MCF 10A (cell line): ENCODE measurements at regions of chr1 and their contacts with region 1.

Region 1: GRCh38 chr1:208245185-208245705 is 1.1 kb upstream of the PLXNA2 start:
- DNase-seq: peak; percentile 98
- H3K4me3 Mint-ChIP-seq: peak overlapping the region; percentile 94
- H3K27ac Mint-ChIP-seq: no peak overlapping the region
- H3K4me1 Mint-ChIP-seq: peaks cover 26% of the 10 kb centered on the region
- H3K27me3 Mint-ChIP-seq: no peaks in the 10 kb centered on the region
- CTCF ChIP-seq: peak; percentile 94

Region 2: DNA sequence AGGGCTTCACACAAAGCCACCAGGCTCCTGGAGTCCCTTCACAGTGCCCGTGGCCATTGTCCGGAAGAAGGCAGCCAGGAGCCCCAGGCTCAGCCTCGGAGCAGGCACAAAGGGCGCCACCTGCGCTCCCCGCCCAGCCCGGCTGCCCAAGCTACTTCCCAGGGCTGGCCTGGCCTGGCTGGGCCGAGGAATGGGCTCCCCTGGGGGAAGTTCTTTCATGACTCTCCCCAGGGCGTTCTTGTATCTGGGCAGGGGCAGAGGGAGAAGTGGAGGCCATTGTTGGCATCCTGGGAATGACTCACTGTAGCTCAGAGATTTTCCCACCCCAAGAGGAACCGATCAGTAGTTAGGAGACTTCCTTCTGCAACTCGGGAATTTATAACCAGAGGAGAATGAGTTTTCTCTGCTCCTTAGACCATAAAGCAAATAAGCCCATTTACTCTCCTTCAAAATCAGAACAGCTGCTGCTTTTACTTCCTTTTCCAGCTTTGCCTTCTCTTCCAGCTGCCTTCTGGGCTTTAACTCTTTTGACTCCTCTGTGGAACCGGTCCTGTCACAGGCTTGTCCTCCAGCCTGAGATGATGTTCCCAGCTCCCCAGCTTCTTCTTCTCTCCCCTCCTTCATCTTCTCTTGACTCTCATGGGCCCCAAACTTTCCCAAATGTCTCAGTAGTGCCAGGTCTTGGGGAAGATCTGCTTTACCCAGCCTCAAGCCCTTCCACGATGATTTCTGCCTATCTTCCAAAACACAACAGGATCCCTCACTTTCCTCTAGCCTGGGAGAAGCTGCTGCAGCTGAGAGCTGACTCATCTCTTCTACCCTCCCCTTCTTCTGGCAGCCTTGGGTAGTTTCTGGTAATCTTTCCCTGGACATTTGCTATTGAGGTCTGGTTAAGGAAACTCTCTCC is 215.6 kb before region 1 on chr1:
- CTCF ChIA-PET with region 1: interaction called, 688 read pairs
- POLR2A ChIA-PET with region 1: interaction called, 21 read pairs
- intact Hi-C with region 1: no loop called
- DNase-seq: peak; percentile 26
- H3K4me3 Mint-ChIP-seq: no peak overlapping the region
- H3K27ac Mint-ChIP-seq: peak overlapping the region; percentile 21
- H3K4me1 Mint-ChIP-seq: no peaks in the 10 kb centered on the region
- H3K27me3 Mint-ChIP-seq: no peaks in the 10 kb centered on the region
- CTCF ChIP-seq: no peak

Region 3: DNA sequence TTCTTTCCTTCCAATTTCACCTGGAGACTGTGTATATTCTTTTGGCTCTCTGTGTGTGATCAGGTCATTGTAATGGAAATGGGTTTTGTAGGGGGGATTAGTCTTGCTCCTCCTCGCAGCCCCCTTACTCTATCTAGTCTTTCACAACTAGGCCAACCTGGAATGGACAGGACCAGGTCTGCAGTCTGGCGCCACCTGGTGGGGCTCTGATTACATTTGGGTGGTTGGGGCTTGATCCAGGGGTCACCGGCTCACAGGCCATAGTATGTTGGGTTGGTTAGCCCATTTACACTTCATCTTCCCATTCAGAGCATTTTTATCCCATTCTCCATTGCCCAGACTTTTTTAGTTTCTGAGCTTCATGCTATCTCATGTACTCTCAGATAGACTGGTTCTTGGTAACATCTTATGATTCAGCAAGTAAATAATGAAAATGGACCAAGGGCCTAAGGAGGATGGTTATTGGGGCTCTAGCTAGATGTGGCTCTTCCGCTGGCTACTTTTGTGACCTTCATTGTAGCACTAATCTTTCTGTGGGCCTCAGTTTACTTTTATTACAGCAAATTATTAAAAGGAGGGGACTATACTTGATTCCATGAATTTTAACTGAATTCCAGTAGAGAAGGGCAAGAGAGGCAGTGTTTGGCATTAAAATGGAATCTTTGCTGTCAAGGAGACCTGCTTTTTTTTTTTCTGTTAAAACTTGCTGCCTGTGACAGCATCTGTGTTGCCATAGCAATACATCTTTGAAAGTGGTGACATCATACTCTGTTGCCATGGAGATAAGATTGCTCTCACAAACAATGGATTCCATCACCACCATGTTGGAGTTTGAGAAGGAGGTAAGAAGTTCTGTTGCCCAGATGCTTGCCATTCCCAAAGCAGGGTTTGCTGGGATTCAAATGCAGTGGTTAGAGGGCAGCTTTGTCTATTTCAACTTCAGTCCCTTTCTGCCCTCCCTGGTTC is 151.2 kb before region 1 on chr1:
- CTCF ChIA-PET with region 1: interaction called, 49 read pairs
- POLR2A ChIA-PET with region 1: no interaction called
- intact Hi-C with region 1: no loop called
- DNase-seq: peak; percentile 83
- H3K4me3 Mint-ChIP-seq: no peak overlapping the region
- H3K27ac Mint-ChIP-seq: peak overlapping the region; percentile 31
- H3K4me1 Mint-ChIP-seq: peaks cover 2% of the 10 kb centered on the region
- H3K27me3 Mint-ChIP-seq: no peaks in the 10 kb centered on the region
- CTCF ChIP-seq: peak; percentile 96

Region 4: GRCh38 chr1:208149776-208150514 is 95.3 kb before region 1 on chr1:
- CTCF ChIA-PET with region 1: interaction called, 297 read pairs
- POLR2A ChIA-PET with region 1: interaction called, 8 read pairs
- intact Hi-C with region 1: no loop called
- DNase-seq: no peak
- H3K4me3 Mint-ChIP-seq: no peak overlapping the region
- H3K27ac Mint-ChIP-seq: no peak overlapping the region
- H3K4me1 Mint-ChIP-seq: peaks cover 10% of the 10 kb centered on the region
- H3K27me3 Mint-ChIP-seq: no peaks in the 10 kb centered on the region
- CTCF ChIP-seq: no peak

Region 5: DNA sequence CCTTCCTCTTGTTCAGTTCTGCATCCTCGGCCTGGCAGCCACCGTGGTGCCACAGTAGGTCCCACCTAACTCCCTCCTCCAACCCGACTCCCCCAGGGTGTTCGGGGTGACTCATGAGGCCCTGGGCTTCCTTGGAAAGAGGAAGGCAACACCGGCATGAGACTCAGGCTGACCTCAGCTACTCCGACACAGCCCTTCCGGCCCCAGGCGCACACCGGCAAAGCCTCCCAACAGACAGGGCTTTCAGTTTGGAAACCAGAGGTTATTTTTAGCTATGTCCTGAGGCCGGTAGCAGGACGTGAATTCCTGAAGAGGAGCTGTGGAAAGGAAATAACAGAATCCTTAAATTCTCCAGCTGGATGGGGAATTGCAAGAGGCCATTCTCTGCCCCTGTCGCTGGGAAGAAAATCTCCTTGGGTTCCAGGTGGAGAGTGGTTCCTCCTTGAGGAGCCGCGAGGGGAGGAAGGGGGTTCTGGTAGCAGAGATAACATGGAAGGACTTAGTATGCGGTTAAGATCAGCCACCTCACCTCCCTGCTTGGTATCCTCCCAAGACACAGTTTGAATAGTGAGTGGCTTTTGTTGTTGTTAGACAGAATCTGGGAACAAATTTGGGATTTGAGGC is 25.5 kb before region 1 on chr1:
- CTCF ChIA-PET with region 1: interaction called, 545 read pairs
- POLR2A ChIA-PET with region 1: interaction called, 186 read pairs
- intact Hi-C with region 1: no loop called
- DNase-seq: peak; percentile 98
- H3K4me3 Mint-ChIP-seq: peak overlapping the region; percentile 57
- H3K27ac Mint-ChIP-seq: peak overlapping the region; percentile 97
- H3K4me1 Mint-ChIP-seq: peaks cover 60% of the 10 kb centered on the region
- H3K27me3 Mint-ChIP-seq: no peaks in the 10 kb centered on the region
- CTCF ChIP-seq: no peak

Region 6: DNA sequence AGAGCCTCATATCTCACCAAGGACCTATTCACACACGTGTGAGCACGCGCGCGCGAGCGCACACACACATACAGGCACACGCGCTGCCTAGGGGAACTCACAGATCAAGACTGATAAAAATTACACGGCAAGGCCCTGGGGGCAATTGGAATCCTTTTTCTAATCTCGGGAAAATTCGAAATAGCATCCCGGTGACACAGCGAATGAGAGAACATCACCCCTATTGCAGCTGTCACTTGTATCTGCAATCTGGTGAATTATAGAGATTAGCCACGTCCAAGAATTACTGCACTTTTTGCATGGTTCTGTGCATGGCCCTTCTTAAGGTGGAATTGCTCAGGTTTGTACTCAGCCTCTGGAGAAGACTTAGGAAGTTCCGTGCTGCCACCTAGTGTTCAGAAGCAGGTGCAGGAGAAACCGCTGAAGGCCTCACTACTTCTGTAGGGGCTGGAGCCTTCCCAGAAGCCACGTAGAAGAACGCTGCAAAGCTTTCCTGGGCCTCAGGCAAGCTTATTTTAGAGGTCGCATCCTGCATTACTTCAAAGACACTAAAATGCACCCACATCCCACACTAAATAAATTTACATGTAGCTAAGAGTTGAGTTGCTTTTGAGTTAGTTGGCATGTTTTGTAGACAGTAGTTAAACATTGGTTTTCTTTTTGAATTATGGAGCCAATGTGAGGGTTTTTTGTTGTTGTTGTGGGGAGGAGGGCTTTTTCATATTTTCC is 1109.0 kb after region 1 on chr1:
- CTCF ChIA-PET with region 1: interaction called, 13 read pairs
- POLR2A ChIA-PET with region 1: interaction called, 17 read pairs
- intact Hi-C with region 1: loop called (anchors 1 kb)
- DNase-seq: peak; percentile 99
- H3K4me3 Mint-ChIP-seq: peak overlapping the region; percentile 7
- H3K27ac Mint-ChIP-seq: peak overlapping the region; percentile 78
- H3K4me1 Mint-ChIP-seq: peaks cover 41% of the 10 kb centered on the region
- H3K27me3 Mint-ChIP-seq: no peaks in the 10 kb centered on the region
- CTCF ChIP-seq: peak; percentile 98